Natural killer cell (primary cell): ENCODE measurements at regions of chr1 and their contacts with region 1.

Region 1: GRCh38 chr1:37692078-37692833 is at the start of gene CDCA8:
- DNase-seq: peak; percentile 97 to 99
- ATAC-seq: peak; percentile 90 to 96 (median 90)
- H3K4me3 ChIP-seq: peak within 1 kb of the TSS; percentile 86
- H3K4me3 Mint-ChIP-seq: peak within 1 kb of the TSS; percentile 94
- H3K27ac ChIP-seq: peak within 1 kb of the TSS; percentile 60
- H3K27ac Mint-ChIP-seq: peak within 1 kb of the TSS; percentile 89 to 93
- H3K4me1 ChIP-seq: peaks cover 38% of the 10 kb centered on the region
- H3K4me1 Mint-ChIP-seq: peaks cover 21 to 43% of the 10 kb centered on the region in 2 donors
- H3K27me3 ChIP-seq: no peaks in the 10 kb centered on the region
- H3K27me3 Mint-ChIP-seq: no peaks in the 10 kb centered on the region
- CTCF ChIP-seq: peak; percentile 43
- total RNA-seq, gene CDCA8: 1.6 to 3.3 (median 2.2) TPM

Region 2: DNA sequence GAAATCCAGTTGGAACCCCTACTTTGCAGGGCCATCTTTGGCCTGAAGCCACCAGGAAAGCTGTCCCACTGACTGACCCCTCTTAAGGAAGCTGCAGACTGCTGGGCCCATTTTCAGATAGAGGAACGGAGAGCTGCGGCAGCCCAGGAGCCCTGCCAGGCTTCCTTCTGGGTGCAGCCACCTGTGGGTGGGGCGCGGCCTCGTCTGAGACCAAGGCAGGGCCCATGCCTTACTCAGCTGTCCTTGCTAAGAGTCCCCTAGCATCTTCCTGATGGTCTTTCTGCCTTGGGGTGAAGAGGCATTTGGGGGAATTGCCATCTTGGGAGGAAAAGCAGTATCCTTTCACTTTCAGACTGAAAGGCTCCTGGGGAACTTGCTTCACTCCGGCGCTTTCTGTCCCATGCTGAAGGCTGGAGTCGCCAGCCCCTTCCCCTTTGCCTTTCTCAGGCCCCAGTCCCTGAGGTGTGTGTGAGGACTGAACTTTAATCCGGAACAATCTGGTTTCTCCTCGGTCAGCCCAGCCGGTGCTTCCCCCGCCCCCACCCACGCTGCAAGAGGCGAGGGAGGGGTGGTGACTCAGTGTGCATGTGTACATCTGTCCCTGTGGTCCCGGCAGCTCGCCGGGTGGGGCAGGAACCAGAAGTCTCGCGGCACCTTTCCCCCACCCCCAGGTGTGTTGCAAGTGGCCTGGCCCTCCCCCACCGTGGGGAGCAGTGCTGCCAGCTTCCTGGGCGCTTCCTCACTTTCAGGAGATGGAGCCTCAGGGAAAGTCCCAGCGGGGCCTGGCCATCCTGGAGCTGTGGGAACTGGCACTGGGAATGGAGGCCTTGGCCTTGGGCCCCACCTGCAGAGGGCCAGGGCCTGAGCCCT is 212.8 kb before region 1 on chr1:
- intact Hi-C with region 1: loop called (anchors 5 kb)
- DNase-seq: peak; percentile 81 to 92
- ATAC-seq: peak; percentile 41 to 72 (median 50)
- H3K4me3 ChIP-seq: peak overlapping the region; percentile 93
- H3K4me3 Mint-ChIP-seq: peak overlapping the region; percentile 95
- H3K27ac ChIP-seq: peak overlapping the region; percentile 99
- H3K27ac Mint-ChIP-seq: peak overlapping the region; percentile 99 to 100
- H3K4me1 ChIP-seq: peaks cover 75% of the 10 kb centered on the region
- H3K4me1 Mint-ChIP-seq: peaks cover 63 to 81% of the 10 kb centered on the region in 2 donors
- H3K27me3 ChIP-seq: no peaks in the 10 kb centered on the region
- H3K27me3 Mint-ChIP-seq: no peaks in the 10 kb centered on the region
- CTCF ChIP-seq: no peak

Region 3: DNA sequence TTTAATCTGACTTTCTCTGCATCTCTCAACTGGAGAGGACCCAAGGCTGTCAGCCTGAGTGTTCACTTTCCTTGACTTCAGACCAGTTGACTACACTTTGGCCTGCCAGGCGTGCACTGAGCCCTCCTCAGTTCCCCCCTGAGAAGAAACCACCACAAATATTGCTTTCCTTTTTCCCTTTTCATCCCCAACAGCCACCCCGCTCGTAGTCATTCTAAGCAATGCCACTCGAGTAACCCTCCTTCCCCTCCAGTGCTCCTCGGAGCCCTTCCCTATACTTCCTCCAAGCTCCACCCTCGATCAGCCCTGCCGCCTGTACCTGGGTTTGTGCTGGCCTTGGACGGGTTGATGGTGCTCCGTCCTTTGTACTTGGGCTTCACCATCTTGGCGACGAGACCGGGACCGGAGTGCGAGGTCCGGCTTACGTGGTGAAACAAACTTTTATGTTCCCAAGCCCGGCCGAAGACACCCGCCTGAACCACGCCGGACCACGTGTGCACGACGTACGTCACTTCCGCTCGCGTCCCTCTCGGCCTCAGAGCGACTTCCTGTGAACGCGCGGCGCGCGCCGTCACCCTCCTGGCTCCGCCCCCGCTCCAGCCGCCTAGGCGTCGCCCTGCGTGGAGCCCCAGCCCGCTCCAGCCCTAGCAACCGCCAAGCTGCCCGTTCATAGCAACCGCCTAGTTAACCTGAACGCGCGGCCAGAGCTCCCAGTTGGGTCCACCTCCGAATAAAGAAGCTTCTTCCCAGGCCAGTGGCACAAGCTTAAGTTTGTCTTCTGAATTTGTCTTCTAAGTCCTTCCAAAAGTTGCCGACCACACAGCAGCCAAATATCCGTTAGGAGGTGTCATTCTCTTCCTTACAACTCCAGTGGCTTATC is 96.6 kb before region 1 on chr1 and contains the start of gene GNL2:
- intact Hi-C with region 1: loop called (anchors 2 kb)
- DNase-seq: peak; percentile 97 to 100
- ATAC-seq: peak; percentile 96 to 100 (median 98)
- H3K4me3 ChIP-seq: peak within 1 kb of the TSS; percentile 87
- H3K4me3 Mint-ChIP-seq: peak within 1 kb of the TSS; percentile 99
- H3K27ac ChIP-seq: peak within 1 kb of the TSS; percentile 94
- H3K27ac Mint-ChIP-seq: peak within 1 kb of the TSS; percentile 99 to 100
- H3K4me1 ChIP-seq: peaks cover 18% of the 10 kb centered on the region
- H3K4me1 Mint-ChIP-seq: peaks cover 23% of the 10 kb centered on the region in 2 donors
- H3K27me3 ChIP-seq: no peaks in the 10 kb centered on the region
- H3K27me3 Mint-ChIP-seq: no peaks in the 10 kb centered on the region
- CTCF ChIP-seq: no peak
- total RNA-seq, gene GNL2: 70.7 to 89.9 (median 85.8) TPM

Region 4: DNA sequence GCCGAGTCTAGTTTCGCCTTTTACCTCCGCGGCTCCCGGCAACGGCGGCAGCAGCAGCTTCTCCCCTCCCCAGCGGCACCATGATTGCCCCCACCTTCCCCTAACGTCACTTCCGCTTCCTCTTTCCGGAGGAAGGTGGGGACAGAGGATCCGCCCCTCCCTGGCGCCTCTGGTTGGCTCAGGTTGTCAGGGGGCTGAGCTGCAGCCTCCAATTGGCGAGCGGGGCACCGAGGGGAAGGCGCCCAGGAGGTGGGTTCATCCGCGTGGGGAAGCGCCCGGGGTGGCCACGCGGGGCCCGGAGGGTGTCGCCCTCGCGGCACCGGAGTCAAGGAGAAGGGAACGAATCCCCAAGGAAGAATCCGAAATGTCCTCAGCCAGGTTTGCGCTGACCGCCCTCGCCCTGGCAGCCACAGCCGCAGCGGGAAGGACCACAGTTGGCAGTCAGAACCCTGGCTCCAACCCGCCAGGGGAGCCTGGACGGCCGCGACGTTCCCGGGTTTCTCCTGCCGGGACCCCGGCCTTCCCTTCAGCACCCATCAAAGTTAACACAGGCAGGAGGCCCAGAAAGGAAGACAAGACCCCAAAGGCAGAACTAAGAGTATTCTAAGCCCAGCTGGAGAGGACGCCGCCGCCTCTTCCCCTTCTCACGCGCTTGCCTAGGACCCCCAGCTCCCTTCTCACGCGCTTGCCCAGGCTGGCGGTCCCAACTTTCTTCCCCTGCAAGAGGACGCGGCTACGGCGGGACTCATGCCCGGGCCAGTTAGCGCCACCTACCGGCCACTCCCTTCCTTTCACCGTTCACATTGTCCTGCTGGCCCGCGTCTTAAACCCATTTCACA is 167.5 kb after region 1 on chr1 and contains the start of gene MTF1:
- intact Hi-C with region 1: loop called (anchors 2 kb)
- DNase-seq: peak; percentile 90 to 99
- ATAC-seq: peak; percentile 97 to 99 (median 98)
- H3K4me3 ChIP-seq: peak within 1 kb of the TSS; percentile 99
- H3K4me3 Mint-ChIP-seq: peak within 1 kb of the TSS; percentile 99
- H3K27ac ChIP-seq: peak within 1 kb of the TSS; percentile 92
- H3K27ac Mint-ChIP-seq: peak within 1 kb of the TSS; percentile 88 to 92
- H3K4me1 ChIP-seq: peaks cover 18% of the 10 kb centered on the region
- H3K4me1 Mint-ChIP-seq: peaks cover 34 to 35% of the 10 kb centered on the region in 2 donors
- H3K27me3 ChIP-seq: no peaks in the 10 kb centered on the region
- H3K27me3 Mint-ChIP-seq: no peaks in the 10 kb centered on the region
- CTCF ChIP-seq: peak; percentile 86
- total RNA-seq, gene MTF1: 31.2 to 35.6 (median 32.7) TPM

Region 5: GRCh38 chr1:38012363-38013226 is 320.3 kb after region 1 on chr1 and contains the start of gene UTP11:
- intact Hi-C with region 1: loop called (anchors 1 kb)
- DNase-seq: peak; percentile 86 to 96
- ATAC-seq: peak; percentile 78 to 94 (median 88)
- H3K4me3 ChIP-seq: peak within 1 kb of the TSS; percentile 65
- H3K4me3 Mint-ChIP-seq: peak within 1 kb of the TSS; percentile 99
- H3K27ac ChIP-seq: peak within 1 kb of the TSS; percentile 79
- H3K27ac Mint-ChIP-seq: peak within 1 kb of the TSS; percentile 96 to 100
- H3K4me1 ChIP-seq: peaks cover 58% of the 10 kb centered on the region
- H3K4me1 Mint-ChIP-seq: peaks cover 57 to 60% of the 10 kb centered on the region in 2 donors
- H3K27me3 ChIP-seq: no peaks in the 10 kb centered on the region
- H3K27me3 Mint-ChIP-seq: no peaks in the 10 kb centered on the region
- CTCF ChIP-seq: no peak
- total RNA-seq, gene UTP11: 13.4 to 20.7 (median 19.2) TPM